SK-N-SH (cell line): ENCODE measurements at regions of chr18 and their contacts with region 1.

Region 1: GRCh38 chr18:22813648-22814328 is 119.3 kb upstream of the RBBP8 start:
- DNase-seq: peak; percentile 43
- H3K4me3 ChIP-seq: no peak overlapping the region
- H3K27ac ChIP-seq: no peak overlapping the region
- H3K4me1 ChIP-seq: peaks cover 4% of the 10 kb centered on the region in 2 experiments; a peak in 2 of 4 replicates
- H3K27me3 ChIP-seq: peaks cover 12% of the 10 kb centered on the region; the same call in 1 of the 2 replicates
- CTCF ChIP-seq: peak; percentile 65
- EP300 ChIP-seq: no peak
- RAD21 ChIP-seq: peak; percentile 93

Region 2: GRCh38 chr18:22800551-22800951 is 13.2 kb before region 1 on chr18:
- CTCF ChIA-PET with region 1: interaction called, 85 read pairs
- POLR2A ChIA-PET with region 1: no interaction called
- DNase-seq: no peak
- H3K4me3 ChIP-seq: no peak overlapping the region
- H3K27ac ChIP-seq: no peak overlapping the region
- H3K4me1 ChIP-seq: no peaks in the 10 kb centered on the region; a peak in 2 of 4 replicates
- H3K27me3 ChIP-seq: no peaks in the 10 kb centered on the region
- CTCF ChIP-seq: no peak
- EP300 ChIP-seq: no peak
- RAD21 ChIP-seq: no peak

Region 3: DNA sequence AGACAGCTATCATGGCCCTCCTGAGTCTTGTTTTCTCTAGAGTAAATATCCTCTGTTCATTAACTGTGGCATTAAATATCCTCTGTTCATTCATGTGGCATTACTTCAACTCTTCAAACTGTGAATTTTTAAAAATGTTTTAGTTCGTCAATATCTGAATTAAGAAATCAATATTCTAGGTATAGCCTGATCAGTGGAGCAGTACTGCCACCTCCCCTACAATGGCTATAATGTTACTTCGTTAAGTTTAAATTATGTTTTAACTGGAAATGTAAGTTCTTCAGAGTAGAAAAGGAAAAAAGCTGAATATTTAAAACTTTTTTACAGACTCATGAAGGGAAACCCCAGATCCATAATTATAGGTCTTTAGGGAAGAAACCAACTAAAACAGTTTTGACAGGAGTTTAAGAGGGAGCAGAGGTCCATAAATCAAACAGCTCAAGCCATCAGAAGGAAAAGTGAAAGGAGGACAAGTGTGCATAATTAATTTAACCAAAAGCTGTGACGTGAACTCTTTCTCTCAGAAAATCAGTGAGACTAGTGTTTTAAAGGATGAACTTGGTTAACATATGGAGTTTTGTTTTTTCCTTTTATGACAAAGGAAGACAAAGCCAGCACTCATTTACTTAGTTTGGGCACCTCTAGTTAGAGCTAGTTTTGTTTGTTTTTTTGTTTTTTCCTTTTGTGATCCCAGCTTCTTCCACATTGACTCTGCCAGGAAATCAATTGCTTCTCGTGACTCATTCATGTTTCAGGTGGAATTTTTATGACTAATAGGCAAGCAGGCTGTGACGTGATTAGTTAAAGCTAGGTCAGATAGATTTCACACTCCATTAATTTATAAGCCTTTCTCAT is 164.3 kb after region 1 on chr18:
- CTCF ChIA-PET with region 1: interaction called, 69 read pairs
- POLR2A ChIA-PET with region 1: no interaction called
- DNase-seq: no peak
- H3K4me3 ChIP-seq: peak overlapping the region in 1 of 2 experiments; percentile 21; a peak in 2 of 4 replicates
- H3K27ac ChIP-seq: peak overlapping the region; percentile 51 to 60
- H3K4me1 ChIP-seq: peaks cover 0 to 11% of the 10 kb centered on the region in 2 experiments; a peak in 1 of 4 replicates
- H3K27me3 ChIP-seq: no peaks in the 10 kb centered on the region
- CTCF ChIP-seq: no peak
- EP300 ChIP-seq: no peak
- RAD21 ChIP-seq: no peak